Psoas muscle (tissue), 8 donors: ENCODE measurements at regions of chr14 and their contacts with region 1.

Region 1: DNA sequence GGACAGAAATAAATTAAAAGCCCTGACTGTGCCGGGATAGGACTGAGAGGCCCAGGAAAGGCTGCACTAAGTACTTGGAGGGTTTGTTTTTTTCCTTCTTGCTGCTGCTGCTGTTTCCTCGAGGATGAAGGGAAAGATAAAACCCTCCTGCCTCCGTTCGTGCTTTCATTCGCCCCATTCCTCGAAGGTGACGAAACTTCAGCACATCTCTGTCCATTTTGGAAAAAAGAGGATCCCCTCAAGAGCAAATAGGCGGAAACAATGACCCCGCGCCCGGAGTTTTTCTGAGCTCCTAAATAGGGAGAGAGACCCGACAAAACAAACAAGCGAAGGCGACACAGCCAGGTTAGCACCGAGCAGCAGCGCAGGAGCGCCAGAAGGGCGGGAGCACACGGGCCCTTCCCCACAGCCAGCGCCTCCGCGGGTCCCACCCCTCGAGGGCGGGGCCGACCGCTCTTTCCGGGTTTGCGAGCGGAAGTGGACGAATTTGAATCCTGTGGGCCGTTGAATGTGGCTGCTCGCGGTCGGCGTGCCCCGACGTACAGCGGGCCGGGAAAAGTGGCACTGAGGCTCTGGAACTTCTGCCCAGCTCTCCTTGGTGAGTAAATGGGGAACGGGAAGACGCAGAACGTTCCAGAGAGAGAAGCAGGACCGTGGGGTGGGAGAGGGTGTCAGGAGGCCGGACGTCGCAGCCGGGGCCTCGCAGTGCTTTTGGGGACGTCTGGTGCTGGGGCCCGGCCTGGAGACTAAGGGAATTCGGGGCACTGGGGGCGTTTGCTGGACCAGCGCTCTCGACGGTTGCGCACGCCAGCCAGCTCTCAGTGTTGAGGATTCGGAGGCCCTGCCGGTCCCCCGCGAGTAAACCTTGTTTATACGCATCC is at the start of gene G2E3:
- DNase-seq: peak; percentile 88 to 92
- ATAC-seq: peak; percentile 98 to 100 (median 100)
- H3K4me3 ChIP-seq: peak within 1 kb of the TSS; percentile 90
- H3K27ac ChIP-seq: peak within 1 kb of the TSS; percentile 73
- H3K4me1 ChIP-seq: peaks cover 8% of the 10 kb centered on the region
- H3K27me3 ChIP-seq: no peaks in the 10 kb centered on the region
- CTCF ChIP-seq: no peak
- total RNA-seq, gene G2E3: 4.3 to 8.0 (median 6.5) TPM

Region 2: GRCh38 chr14:30597504-30597903 is 38.6 kb after region 1 on chr14:
- intact Hi-C with region 1: loop called in 1 of 2 experiments (anchors 5 kb)
- DNase-seq: no peak
- ATAC-seq: no peak
- H3K4me3 ChIP-seq: no peak overlapping the region
- H3K27ac ChIP-seq: no peak overlapping the region
- H3K4me1 ChIP-seq: peaks cover 15% of the 10 kb centered on the region
- H3K27me3 ChIP-seq: no peaks in the 10 kb centered on the region
- CTCF ChIP-seq: no peak